CD4-positive, alpha-beta memory T cell (primary cell): ENCODE measurements at regions of chr2 and their contacts with region 1.

Region 1: GRCh38 chr2:219155054-219155644 is 5.5 kb downstream of the NHEJ1 start:
- DNase-seq: peak in 4 of 5 donors; percentile 50 to 62 (median 56)
- H3K4me3 ChIP-seq: no peak overlapping the region
- H3K4me3 Mint-ChIP-seq: no peak overlapping the region
- H3K27ac ChIP-seq: no peak overlapping the region
- H3K27ac Mint-ChIP-seq: no peak overlapping the region
- H3K4me1 ChIP-seq: peaks cover 6% of the 10 kb centered on the region
- H3K4me1 Mint-ChIP-seq: peaks cover 7 to 9% (median 8%) of the 10 kb centered on the region in 4 donors
- H3K27me3 ChIP-seq: no peaks in the 10 kb centered on the region
- H3K27me3 Mint-ChIP-seq: no peaks in the 10 kb centered on the region

Region 2: DNA sequence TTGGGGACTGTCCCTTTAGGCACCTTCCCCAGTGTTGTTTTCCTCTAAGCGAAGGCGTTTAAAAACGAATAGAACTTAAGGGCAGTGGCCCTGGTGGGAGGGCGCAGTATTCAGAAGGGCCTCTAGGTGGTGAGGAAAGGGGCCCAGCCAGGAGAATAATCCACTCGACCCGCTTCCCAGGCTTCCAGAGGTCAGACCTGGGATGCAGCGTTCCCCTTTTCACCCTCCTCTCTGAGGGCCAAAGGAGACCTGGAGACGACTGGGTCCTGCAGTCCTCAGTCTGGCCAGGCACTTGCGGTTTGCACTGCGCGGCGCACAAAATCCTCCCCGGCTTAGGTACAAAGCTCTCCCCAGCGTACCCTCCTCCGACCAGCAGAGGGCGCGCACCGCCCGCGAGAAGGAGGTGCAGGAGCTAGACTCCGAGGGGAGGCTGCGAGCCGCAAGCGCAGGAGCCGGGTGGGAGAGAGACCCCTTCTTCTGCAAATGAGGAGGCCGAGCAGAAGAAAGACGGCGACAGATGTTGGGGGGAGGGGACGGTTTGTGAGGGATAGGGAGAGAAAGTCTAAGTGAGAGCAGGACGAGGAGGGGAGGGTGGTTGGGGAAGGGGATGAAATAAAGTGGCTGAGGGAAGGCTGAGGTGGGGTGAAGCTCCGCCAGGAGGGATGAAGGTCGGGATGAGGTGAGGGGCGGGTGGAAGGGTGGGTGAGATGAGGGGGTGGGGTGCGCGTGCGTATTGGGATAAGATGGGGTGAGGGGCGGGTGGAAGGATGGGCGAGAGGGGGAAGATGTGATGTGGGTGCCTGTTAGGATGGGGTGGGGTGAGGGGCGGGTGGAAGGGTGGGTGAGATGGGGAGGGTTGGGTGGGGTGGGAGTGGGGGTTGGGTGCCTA is 175.1 kb before region 1 on chr2:
- CTCF ChIA-PET with region 1: interaction called, 11 read pairs
- POLR2A ChIA-PET with region 1: no interaction called
- intact Hi-C with region 1: loop called (anchors 2 kb)
- DNase-seq: peak; percentile 80 to 84 (median 83)
- H3K4me3 ChIP-seq: peak overlapping the region in 1 of 2 donors; percentile 27
- H3K4me3 Mint-ChIP-seq: peak overlapping the region; percentile 54 to 93 (median 80)
- H3K27ac ChIP-seq: no peak overlapping the region
- H3K27ac Mint-ChIP-seq: peak overlapping the region in 3 of 7 donors; percentile 10 to 64 (median 12)
- H3K4me1 ChIP-seq: peaks cover 41% of the 10 kb centered on the region
- H3K4me1 Mint-ChIP-seq: peaks cover 14 to 45% (median 22%) of the 10 kb centered on the region in 4 donors
- H3K27me3 ChIP-seq: peaks cover 37% of the 10 kb centered on the region
- H3K27me3 Mint-ChIP-seq: peaks cover 63 to 69% of the 10 kb centered on the region in 2 donors

Region 3: DNA sequence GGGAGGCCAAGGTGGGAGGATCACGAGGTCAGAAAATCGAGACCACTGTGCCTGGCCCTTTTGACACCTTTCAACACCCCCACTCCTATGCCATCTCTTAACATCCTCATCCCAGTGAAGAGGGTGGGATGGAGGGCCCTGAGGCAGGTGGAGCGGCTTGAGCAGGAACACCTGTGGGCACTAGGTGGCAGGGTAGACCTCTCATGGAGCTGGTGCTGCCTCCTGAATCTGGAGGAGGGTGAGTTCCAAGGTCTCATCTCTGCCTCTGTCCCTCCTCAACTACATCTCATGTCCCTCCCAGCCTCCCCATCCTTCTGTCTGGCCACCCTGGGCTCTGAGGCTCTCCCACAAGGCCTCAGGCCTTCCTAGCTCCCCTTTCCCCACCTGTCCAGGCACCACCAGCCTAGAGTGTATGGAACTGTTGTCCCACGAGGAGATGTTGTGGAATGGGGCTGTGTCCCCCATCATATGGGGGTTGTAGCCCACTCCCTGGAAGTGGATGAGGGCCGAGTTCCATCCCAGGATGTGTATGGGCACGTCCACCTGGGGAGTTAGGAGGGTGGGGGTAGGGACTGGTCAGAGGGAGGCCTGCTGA is 144.9 kb before region 1 on chr2:
- CTCF ChIA-PET with region 1: interaction called, 5 read pairs
- POLR2A ChIA-PET with region 1: no interaction called
- intact Hi-C with region 1: loop called (anchors 1 kb)
- DNase-seq: no peak
- H3K4me3 ChIP-seq: no peak overlapping the region
- H3K4me3 Mint-ChIP-seq: no peak overlapping the region
- H3K27ac ChIP-seq: no peak overlapping the region
- H3K27ac Mint-ChIP-seq: no peak overlapping the region
- H3K4me1 ChIP-seq: no peaks in the 10 kb centered on the region
- H3K4me1 Mint-ChIP-seq: no peaks in the 10 kb centered on the region
- H3K27me3 ChIP-seq: no peaks in the 10 kb centered on the region
- H3K27me3 Mint-ChIP-seq: peaks cover 13 to 28% of the 10 kb centered on the region in 2 donors

Region 4: DNA sequence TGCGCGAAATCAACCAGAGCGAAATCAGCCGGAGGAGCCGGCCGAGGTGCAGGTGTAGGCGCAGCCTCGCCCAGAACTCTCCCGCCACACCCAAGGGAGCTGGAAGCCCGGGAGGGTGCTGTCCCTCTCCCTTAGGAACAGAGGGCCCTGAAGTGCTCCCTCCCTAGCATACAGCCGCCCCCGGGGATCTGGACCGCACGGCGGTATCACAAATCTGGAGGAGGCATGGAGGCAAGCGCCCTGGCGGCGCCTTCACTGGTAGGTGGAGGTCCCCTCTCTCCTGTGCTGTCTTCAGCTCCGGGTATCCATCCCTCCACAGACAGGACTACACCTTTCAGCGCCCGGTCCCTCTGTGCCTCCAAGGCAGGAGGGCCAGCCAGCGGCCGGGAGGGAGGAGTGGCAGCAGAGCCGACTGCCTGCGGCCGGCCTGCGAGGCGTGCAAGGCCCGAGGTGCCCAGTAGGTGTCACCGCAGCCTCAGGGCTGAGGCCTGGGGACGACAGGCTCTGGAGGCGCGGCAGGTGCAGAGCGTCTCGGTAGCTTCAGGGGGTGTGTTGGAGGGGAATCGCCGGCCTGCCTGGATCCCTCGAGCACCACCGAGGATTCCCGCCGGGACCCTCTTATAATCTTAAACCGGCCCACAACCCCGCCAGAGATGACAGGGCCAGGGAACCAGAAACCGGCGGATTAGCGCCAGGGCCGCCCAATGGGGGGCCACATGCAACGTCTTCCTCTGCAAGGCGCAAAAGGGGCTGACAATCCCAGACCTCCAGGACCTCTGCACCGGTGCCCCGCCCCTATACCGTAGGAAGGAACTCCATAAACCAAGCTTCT is 97.2 kb before region 1 on chr2:
- CTCF ChIA-PET with region 1: interaction called, 125 read pairs
- POLR2A ChIA-PET with region 1: interaction called, 3 read pairs
- intact Hi-C with region 1: loop called (anchors 1 kb)
- DNase-seq: peak; percentile 68 to 75 (median 70)
- H3K4me3 ChIP-seq: peak overlapping the region in 1 of 2 donors; percentile 24
- H3K4me3 Mint-ChIP-seq: peak overlapping the region in 7 of 8 donors; percentile 20 to 74 (median 65)
- H3K27ac ChIP-seq: no peak overlapping the region
- H3K27ac Mint-ChIP-seq: peak overlapping the region in 1 of 7 donors; percentile 30
- H3K4me1 ChIP-seq: peaks cover 35% of the 10 kb centered on the region
- H3K4me1 Mint-ChIP-seq: peaks cover 6 to 40% (median 20%) of the 10 kb centered on the region in 4 donors
- H3K27me3 ChIP-seq: peaks cover 40% of the 10 kb centered on the region
- H3K27me3 Mint-ChIP-seq: peaks cover 33 to 45% of the 10 kb centered on the region in 2 donors

Region 5: DNA sequence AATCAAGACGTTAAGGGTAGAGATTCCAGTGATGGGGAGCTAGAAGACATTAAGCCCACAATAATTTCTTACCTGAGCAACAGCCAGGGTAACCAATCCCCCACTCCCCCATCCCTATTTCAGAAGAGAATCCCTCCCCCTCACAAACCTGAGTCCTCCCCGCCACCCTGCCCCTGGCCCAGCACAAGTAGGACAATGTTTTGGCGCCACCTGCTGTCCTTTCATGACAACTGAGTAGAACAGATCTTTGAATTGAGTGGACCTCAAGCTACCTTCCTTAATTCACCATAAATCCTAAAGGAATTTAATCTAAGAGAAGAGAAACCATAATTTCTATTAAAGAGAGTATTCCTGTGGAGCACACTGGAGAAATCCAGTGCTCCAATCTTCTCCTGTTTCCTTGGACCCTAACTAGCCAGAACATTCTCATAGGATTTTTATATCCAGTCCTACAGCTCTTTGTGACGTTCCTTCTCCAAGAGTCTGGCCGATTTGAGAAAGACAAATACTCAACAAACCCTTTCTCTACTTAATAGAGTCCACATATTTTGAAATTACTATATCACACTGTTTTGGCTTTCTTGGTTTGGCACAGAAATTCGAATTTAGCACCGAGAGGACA is 35.6 kb before region 1 on chr2:
- CTCF ChIA-PET with region 1: interaction called, 17 read pairs
- POLR2A ChIA-PET with region 1: no interaction called
- intact Hi-C with region 1: no loop called
- DNase-seq: peak; percentile 27 to 42 (median 37)
- H3K4me3 ChIP-seq: no peak overlapping the region
- H3K4me3 Mint-ChIP-seq: no peak overlapping the region
- H3K27ac ChIP-seq: no peak overlapping the region
- H3K27ac Mint-ChIP-seq: no peak overlapping the region
- H3K4me1 ChIP-seq: peaks cover 5% of the 10 kb centered on the region
- H3K4me1 Mint-ChIP-seq: peaks cover 7 to 11% (median 8%) of the 10 kb centered on the region in 4 donors
- H3K27me3 ChIP-seq: no peaks in the 10 kb centered on the region
- H3K27me3 Mint-ChIP-seq: no peaks in the 10 kb centered on the region